ENCODE measurements at regions of chr10 and their contacts with region 1.

Region 1: GRCh38 chr10:10824591-10825148 is 193.0 kb upstream of the CELF2 start:
- DNase-seq: peak; percentile 65 to 81
- ATAC-seq: peak; percentile 86
- H3K4me3 ChIP-seq: no peak overlapping the region
- H3K27ac ChIP-seq: peak overlapping the region; percentile 80 to 93
- H3K4me1 ChIP-seq: peaks cover 4 to 11% of the 10 kb centered on the region in 2 donors
- H3K27me3 ChIP-seq: no peaks in the 10 kb centered on the region

Region 2: GRCh38 chr10:10911471-10911921 is 86.8 kb after region 1 on chr10:
- intact Hi-C with region 1: loop called in 1 of 2 experiments (anchors 10 kb)
- DNase-seq: peak; percentile 88 to 93
- ATAC-seq: peak; percentile 88
- H3K4me3 ChIP-seq: no peak overlapping the region
- H3K27ac ChIP-seq: peak overlapping the region; percentile 28 to 79
- H3K4me1 ChIP-seq: peaks cover 0 to 2% of the 10 kb centered on the region in 2 donors
- H3K27me3 ChIP-seq: no peaks in the 10 kb centered on the region